Stomach (tissue), 19 donors: ENCODE measurements at regions of chr5 and their contacts with region 1.

Region 1: GRCh38 chr5:64207978-64208377 is 42.3 kb downstream of the RNF180 start:
- DNase-seq: peak in 1 of 2 donors; percentile 24
- H3K4me3 ChIP-seq: no peak overlapping the region
- H3K27ac ChIP-seq: no peak overlapping the region
- H3K4me1 ChIP-seq: peaks cover 0 to 8% (median 4%) of the 10 kb centered on the region in 4 donors
- H3K27me3 ChIP-seq: no peaks in the 10 kb centered on the region
- CTCF ChIP-seq: peak in 1 of 7 experiments; percentile 22
- EP300 ChIP-seq: no peak
- POLR2A ChIP-seq: no peak

Region 2: GRCh38 chr5:64158827-64159226 is 49.2 kb before region 1 on chr5:
- intact Hi-C with region 1: loop called (anchors 10 kb)
- DNase-seq: no peak
- H3K4me3 ChIP-seq: no peak overlapping the region
- H3K27ac ChIP-seq: no peak overlapping the region
- H3K4me1 ChIP-seq: no peaks in the 10 kb centered on the region
- H3K27me3 ChIP-seq: no peaks in the 10 kb centered on the region
- CTCF ChIP-seq: no peak
- EP300 ChIP-seq: no peak
- POLR2A ChIP-seq: no peak

Region 3: GRCh38 chr5:64887910-64888309 is 679.9 kb after region 1 on chr5:
- intact Hi-C with region 1: no loop called
- DNase-seq: no peak
- H3K4me3 ChIP-seq: no peak overlapping the region
- H3K27ac ChIP-seq: no peak overlapping the region
- H3K4me1 ChIP-seq: no peaks in the 10 kb centered on the region
- H3K27me3 ChIP-seq: no peaks in the 10 kb centered on the region
- CTCF ChIP-seq: no peak
- EP300 ChIP-seq: no peak
- POLR2A ChIP-seq: no peak